ENCODE measurements at regions of chr7 and their contacts with region 1.

Region 1: DNA sequence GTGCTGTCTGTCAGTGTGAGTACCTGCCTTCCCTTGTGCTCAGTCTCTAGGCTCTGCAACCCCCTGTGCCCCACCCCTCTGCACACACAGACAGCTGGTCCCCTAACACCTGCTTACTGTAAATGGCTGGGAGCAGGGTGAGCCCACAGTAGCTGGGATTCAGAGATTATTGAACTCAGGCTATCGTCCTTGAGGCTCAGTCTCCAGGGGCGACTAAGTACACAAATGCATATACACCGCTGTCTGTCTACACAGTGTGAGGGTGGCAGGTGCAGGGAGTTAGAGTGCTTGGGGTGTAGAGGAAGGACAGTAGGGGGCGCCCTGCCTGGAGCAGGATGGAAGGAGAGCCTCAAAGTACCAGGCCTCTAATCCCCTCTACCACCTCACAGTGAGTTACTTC is 12.9 kb downstream of the UPP1 start:
- DNase-seq: no peak
- ATAC-seq: no peak
- H3K4me3 Mint-ChIP-seq: no peak overlapping the region
- H3K27ac Mint-ChIP-seq: peak overlapping the region; percentile 23 to 85 (median 66)
- H3K4me1 Mint-ChIP-seq: peaks cover 23 to 47% (median 42%) of the 10 kb centered on the region in 4 donors
- H3K27me3 Mint-ChIP-seq: no peaks in the 10 kb centered on the region

Region 2: DNA sequence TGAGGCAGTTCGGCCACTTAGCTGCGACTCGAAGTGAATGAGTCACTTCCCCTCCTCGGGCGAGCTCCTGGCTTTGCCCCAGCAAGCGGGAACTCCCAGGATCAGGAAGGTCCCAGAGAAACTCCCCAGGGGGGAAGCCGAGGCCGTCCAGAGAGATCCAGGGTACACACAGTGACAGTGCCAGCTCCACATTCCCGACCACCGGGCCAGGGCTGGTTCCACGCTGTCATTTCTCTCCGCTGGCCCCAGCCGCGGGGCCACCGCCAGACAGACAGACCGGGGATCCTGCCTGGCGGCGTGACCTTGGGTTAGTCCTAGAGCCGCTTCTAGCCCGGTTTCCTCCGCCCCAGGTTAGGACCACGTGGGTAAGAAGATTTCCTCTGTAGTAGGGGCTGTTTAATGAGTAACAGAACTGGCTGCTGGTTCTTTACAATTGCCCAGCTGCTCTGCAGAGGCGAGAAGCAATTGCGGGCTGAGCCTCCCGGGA is 13.4 kb before region 1 on chr7:
- POLR2A ChIA-PET with region 1: interaction called, 14 read pairs
- DNase-seq: no peak
- ATAC-seq: peak; percentile 73 to 75
- H3K4me3 Mint-ChIP-seq: peak overlapping the region; percentile 82 to 98 (median 90)
- H3K27ac Mint-ChIP-seq: peak overlapping the region; percentile 81 to 97 (median 94)
- H3K4me1 Mint-ChIP-seq: peaks cover 40 to 90% (median 79%) of the 10 kb centered on the region in 4 donors
- H3K27me3 Mint-ChIP-seq: no peaks in the 10 kb centered on the region

Measured in naive thymus-derived CD8-positive, alpha-beta T cell (primary cell).